GM18951 (cell line): ENCODE measurements at regions of chr11 and their contacts with region 1.

Region 1: DNA sequence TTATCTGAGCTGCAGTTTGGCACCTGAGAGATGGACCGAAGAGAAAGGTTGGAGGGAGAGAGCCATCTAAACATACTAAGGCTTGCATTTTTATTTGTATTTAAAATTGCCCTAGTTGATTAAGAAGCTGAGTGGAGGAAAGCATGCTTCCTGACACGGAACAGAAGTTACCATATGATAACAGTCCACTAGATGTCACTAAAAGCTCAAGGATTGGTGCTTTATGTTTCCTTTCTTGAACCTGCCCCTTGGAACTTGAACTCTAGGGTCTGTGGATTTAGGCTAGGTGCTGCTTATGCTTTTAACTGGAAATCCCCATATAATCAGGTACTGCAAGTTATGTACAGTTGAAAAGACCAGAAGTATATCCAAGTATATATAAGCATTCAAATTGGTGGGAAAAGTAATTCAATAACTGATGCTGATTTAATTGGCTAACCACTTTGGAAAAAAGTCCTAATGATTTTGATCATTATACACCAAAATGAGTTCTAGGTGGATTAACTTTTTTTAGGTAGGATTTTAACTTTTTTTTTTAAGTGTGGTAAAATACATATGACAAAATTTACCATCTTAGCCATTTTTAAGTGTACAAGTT is 9.5 kb downstream of the RBMXL2 start:
- POLR2A ChIP-seq: no peak

Region 2: GRCh38 chr11:7688238-7688826 is 590.0 kb after region 1 on chr11:
- in situ Hi-C with region 1: loop called (anchors 10 kb)
- POLR2A ChIP-seq: no peak